ENCODE measurements at regions of chr7 and their contacts with region 1.

Region 1: DNA sequence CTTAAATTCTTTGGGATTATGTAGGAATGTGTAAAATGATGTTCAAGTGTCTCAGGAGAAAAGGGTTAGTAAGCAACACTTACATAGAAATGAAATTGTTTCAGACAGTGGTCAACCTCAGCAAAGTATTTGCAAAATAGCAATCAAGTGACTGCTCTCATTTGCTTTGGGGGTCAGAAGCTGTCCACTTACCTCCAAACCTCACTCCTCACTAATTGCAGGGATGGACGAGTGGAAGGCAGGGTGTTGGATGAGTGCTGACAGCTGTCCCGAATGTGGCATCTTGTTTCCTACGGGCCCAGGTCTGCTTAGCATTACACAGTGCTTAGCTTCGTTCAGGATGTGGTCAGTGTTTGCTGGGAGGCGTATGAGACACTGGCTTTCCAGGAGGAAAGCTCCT is 437.0 kb downstream of the SUGCT start:
- DNase-seq: no peak
- H3K4me3 ChIP-seq: no peak overlapping the region
- H3K4me3 Mint-ChIP-seq: no peak overlapping the region
- H3K27ac ChIP-seq: no peak overlapping the region
- H3K27ac Mint-ChIP-seq: no peak overlapping the region
- H3K4me1 ChIP-seq: no peaks in the 10 kb centered on the region
- H3K4me1 Mint-ChIP-seq: peaks cover 2% of the 10 kb centered on the region
- H3K27me3 ChIP-seq: no peaks in the 10 kb centered on the region
- H3K27me3 Mint-ChIP-seq: peaks cover 0 to 3% (median 1%) of the 10 kb centered on the region in 3 donors
- CTCF ChIP-seq: no peak

Region 2: GRCh38 chr7:40447345-40447744 is 124.5 kb before region 1 on chr7:
- intact Hi-C with region 1: no loop called
- DNase-seq: no peak
- H3K4me3 ChIP-seq: no peak overlapping the region
- H3K4me3 Mint-ChIP-seq: no peak overlapping the region
- H3K27ac ChIP-seq: no peak overlapping the region
- H3K27ac Mint-ChIP-seq: peak overlapping the region in 1 of 7 donors; percentile 47
- H3K4me1 ChIP-seq: no peaks in the 10 kb centered on the region
- H3K4me1 Mint-ChIP-seq: peaks cover 9% of the 10 kb centered on the region
- H3K27me3 ChIP-seq: no peaks in the 10 kb centered on the region
- H3K27me3 Mint-ChIP-seq: no peaks in the 10 kb centered on the region
- CTCF ChIP-seq: no peak

Region 3: GRCh38 chr7:40507166-40507565 is 64.6 kb before region 1 on chr7:
- intact Hi-C with region 1: loop called in 1 of 2 experiments (anchors 2 kb)
- DNase-seq: peak; percentile 2 to 23 (median 11)
- H3K4me3 ChIP-seq: no peak overlapping the region
- H3K4me3 Mint-ChIP-seq: no peak overlapping the region
- H3K27ac ChIP-seq: no peak overlapping the region
- H3K27ac Mint-ChIP-seq: peak overlapping the region in 1 of 7 donors; percentile 26
- H3K4me1 ChIP-seq: no peaks in the 10 kb centered on the region
- H3K4me1 Mint-ChIP-seq: no peaks in the 10 kb centered on the region
- H3K27me3 ChIP-seq: no peaks in the 10 kb centered on the region
- H3K27me3 Mint-ChIP-seq: no peaks in the 10 kb centered on the region
- CTCF ChIP-seq: peak; percentile 62

Measured in CD14-positive monocyte (primary cell).